ENCODE measurements at regions of chr5 and their contacts with region 1.

Region 1: DNA sequence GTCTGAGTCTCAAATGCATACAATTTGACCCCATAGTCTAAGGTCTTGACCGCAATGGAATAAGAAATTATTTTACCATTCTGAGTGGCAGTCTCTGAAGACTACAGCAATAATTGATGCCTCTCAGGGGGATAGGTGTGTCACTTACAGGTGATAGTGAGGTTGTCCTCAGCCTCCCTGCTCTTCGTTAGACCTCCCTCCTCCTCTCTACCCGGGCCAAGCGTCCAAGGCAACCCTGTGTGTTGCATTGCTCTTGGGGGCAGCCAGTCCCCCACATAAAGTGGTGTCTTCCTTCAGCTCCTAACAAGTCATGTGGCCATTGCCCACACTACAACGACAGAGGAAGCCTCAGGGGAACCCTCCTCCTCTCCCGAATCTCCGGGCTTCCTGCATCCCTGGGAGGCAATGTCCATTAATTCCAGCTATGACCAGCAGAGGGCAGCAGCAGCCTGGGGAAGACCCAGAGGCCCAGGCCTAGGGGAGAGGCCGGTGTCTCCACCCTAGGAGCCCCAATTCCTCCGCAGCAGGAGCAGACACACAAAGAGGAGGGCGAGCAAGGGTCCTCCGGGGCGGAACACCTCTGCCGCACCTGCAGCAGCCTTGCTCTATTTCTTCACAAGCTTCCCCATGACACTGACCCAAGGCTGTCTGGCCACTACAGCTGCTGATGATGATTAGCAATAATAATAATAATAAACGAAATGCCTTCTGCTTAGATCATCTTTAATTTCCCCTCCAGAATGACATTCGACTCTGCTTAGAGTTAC is 134.8 kb downstream of the KCNIP1 start:
- DNase-seq: peak; percentile 87
- H3K4me3 ChIP-seq: no peak overlapping the region; a peak in 1 of 4 replicates
- H3K27ac ChIP-seq: no peak overlapping the region
- H3K4me1 ChIP-seq: peaks cover 7% of the 10 kb centered on the region in 2 experiments; a peak in 2 of 4 replicates
- H3K27me3 ChIP-seq: no peaks in the 10 kb centered on the region; the same call in 1 of the 2 replicates
- CTCF ChIP-seq: peak; percentile 87
- EP300 ChIP-seq: no peak
- RAD21 ChIP-seq: peak; percentile 86

Region 2: GRCh38 chr5:170429014-170429413 is 209.6 kb before region 1 on chr5:
- CTCF ChIA-PET with region 1: interaction called, 166 read pairs
- POLR2A ChIA-PET with region 1: no interaction called
- DNase-seq: peak; percentile 28
- H3K4me3 ChIP-seq: no peak overlapping the region
- H3K27ac ChIP-seq: no peak overlapping the region
- H3K4me1 ChIP-seq: peaks cover 0 to 33% of the 10 kb centered on the region in 2 experiments; a peak in 2 of 4 replicates
- H3K27me3 ChIP-seq: no peaks in the 10 kb centered on the region; the same call in 1 of the 2 replicates
- CTCF ChIP-seq: peak; percentile 35
- EP300 ChIP-seq: no peak
- RAD21 ChIP-seq: no peak

Region 3: GRCh38 chr5:170603578-170604565 is 34.8 kb before region 1 on chr5:
- CTCF ChIA-PET with region 1: interaction called, 614 read pairs
- POLR2A ChIA-PET with region 1: no interaction called
- DNase-seq: peak; percentile 84
- H3K4me3 ChIP-seq: no peak overlapping the region
- H3K27ac ChIP-seq: no peak overlapping the region
- H3K4me1 ChIP-seq: peaks cover 0 to 25% of the 10 kb centered on the region in 2 experiments; a peak in 1 of 4 replicates
- H3K27me3 ChIP-seq: peaks cover 14% of the 10 kb centered on the region; the same call in 1 of the 2 replicates
- CTCF ChIP-seq: peak; percentile 79
- EP300 ChIP-seq: no peak
- RAD21 ChIP-seq: peak; percentile 89

Region 4: DNA sequence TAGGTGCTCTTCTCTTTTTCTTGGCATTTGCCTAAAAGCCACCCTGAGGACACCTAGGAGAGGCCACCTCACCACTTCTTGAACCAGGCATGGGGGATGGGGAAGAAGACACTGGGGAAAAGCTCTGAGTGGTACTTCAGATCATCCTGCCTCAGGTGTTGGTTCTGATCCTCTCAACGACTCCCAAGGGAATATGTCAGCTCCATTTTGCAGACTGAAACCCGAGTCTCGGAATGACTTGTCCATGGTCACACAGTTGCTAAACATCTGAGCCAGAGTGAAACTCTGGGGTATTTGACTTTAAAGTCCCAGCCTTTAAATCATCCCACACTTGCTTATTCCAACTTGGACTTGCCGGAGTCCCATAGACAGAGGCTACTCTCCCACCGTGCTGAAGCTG is 24.3 kb after region 1 on chr5:
- CTCF ChIA-PET with region 1: interaction called, 30 read pairs
- POLR2A ChIA-PET with region 1: no interaction called
- DNase-seq: no peak
- H3K4me3 ChIP-seq: no peak overlapping the region
- H3K27ac ChIP-seq: no peak overlapping the region
- H3K4me1 ChIP-seq: no peaks in the 10 kb centered on the region
- H3K27me3 ChIP-seq: no peaks in the 10 kb centered on the region; the same call in 1 of the 2 replicates
- CTCF ChIP-seq: no peak
- EP300 ChIP-seq: no peak
- RAD21 ChIP-seq: no peak

Region 5: DNA sequence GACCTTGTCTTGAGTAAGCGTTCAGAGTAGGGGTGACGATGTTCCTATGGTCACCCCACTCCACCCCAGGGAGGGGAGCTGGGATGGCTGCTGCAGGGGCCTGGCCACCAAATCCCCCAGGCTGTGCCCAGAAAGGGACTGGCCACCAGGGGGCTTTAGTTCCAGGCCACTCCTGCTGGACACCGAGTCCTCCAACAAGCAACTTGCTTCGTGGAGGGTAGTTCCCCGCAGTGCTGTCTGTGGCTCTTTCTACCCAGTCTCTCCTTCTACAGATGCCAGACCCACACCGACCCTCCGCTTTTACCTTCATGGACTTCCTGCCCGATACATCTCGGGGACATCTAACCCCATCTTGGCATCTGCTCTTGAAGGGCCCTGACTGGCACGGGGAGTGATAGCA is 109.2 kb after region 1 on chr5:
- CTCF ChIA-PET with region 1: interaction called, 20 read pairs
- POLR2A ChIA-PET with region 1: no interaction called
- DNase-seq: peak; percentile 59
- H3K4me3 ChIP-seq: no peak overlapping the region
- H3K27ac ChIP-seq: peak overlapping the region in 1 of 2 experiments; percentile 20; a peak in 1 of 4 replicates
- H3K4me1 ChIP-seq: peaks cover 0 to 77% of the 10 kb centered on the region in 2 experiments; a peak in 2 of 4 replicates
- H3K27me3 ChIP-seq: no peaks in the 10 kb centered on the region
- CTCF ChIP-seq: peak; percentile 48
- EP300 ChIP-seq: no peak
- RAD21 ChIP-seq: peak; percentile 33; the same call in 1 of the 2 replicates

Region 6: DNA sequence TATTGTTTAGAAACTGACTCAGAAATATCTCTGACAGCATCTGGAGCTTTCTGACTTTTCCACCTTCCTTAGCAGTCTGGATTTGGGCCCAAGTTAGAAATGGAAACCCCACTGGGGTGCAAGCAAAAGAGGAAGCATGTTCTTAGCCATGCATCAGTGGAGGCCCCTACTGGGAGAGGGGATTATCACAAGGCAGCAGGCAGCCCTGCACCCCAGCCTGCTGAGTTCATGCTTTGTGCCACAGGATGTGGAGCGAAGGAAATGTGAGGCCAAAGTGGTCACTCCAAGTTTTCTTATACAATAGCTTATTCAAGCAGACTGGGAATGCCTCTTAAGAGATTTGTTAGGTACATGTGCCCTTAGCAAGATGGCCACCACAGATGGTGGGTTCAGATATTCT is 524.0 kb after region 1 on chr5:
- CTCF ChIA-PET with region 1: no interaction called
- POLR2A ChIA-PET with region 1: no interaction called
- DNase-seq: peak; percentile 38
- H3K4me3 ChIP-seq: no peak overlapping the region
- H3K27ac ChIP-seq: no peak overlapping the region; a peak in 1 of 4 replicates
- H3K4me1 ChIP-seq: peaks cover 0 to 22% of the 10 kb centered on the region in 2 experiments; a peak in 2 of 4 replicates
- H3K27me3 ChIP-seq: no peaks in the 10 kb centered on the region
- CTCF ChIP-seq: peak; percentile 48
- EP300 ChIP-seq: no peak
- RAD21 ChIP-seq: peak; percentile 52

Measured in SK-N-SH (cell line).